CD4-positive, alpha-beta T cell (primary cell): ENCODE measurements at regions of chr14 and their contacts with region 1.

Region 1: DNA sequence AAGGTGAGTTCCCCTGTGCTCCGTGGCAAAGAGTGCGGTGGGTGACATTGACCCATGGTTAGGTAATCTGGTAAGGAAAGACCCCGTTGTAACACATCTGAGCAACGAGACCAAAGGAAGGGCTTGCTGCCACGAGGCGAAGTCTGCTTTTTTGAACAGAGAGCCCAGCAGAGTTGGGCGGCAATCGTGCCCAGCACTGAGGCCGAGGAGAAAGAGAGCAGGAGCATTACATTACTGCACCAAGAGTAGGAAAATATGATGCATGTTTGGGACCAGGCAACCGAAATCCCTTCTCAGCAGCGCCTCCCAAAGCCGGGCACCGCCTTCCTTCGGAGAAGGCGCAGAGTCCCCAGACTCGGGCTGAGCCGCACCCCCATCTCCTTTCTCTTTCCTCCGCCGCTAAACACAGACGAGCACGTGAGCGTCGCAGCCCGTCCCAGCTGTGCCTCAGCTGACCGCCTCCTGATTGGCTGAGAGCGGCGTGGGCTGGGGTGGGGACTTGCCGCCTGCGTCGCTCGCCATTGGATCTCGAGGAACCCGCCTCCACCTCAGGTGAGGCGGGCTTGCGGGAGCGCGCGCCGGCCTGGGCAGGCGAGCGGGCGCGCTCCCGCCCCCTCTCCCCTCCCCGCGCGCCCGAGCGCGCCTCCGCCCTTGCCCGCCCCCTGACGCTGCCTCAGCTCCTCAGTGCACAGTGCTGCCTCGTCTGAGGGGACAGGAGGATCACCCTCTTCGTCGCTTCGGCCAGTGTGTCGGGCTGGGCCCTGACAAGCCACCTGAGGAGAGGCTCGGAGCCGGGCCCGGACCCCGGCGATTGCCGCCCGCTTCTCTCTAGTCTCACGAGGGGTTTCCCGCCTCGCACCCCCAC is at the start of gene HIF1A:
- DNase-seq: peak; percentile 87 to 100 (median 95)
- ATAC-seq: peak; percentile 95
- H3K4me3 ChIP-seq: peak within 1 kb of the TSS; percentile 90
- H3K4me3 Mint-ChIP-seq: peak within 1 kb of the TSS; percentile 98
- H3K27ac ChIP-seq: peak within 1 kb of the TSS; percentile 89 to 91
- H3K27ac Mint-ChIP-seq: peak within 1 kb of the TSS; percentile 97
- H3K4me1 ChIP-seq: peaks cover 17% of the 10 kb centered on the region
- H3K4me1 Mint-ChIP-seq: peaks cover 72% of the 10 kb centered on the region
- H3K27me3 ChIP-seq: no peaks in the 10 kb centered on the region
- H3K27me3 Mint-ChIP-seq: no peaks in the 10 kb centered on the region
- CTCF ChIP-seq: no peak
- total RNA-seq, gene HIF1A: 350 to 369 TPM

Region 2: GRCh38 chr14:61003571-61003970 is 691.5 kb before region 1 on chr14:
- CTCF ChIA-PET with region 1: no interaction called
- POLR2A ChIA-PET with region 1: no interaction called
- intact Hi-C with region 1: no loop called
- DNase-seq: no peak
- ATAC-seq: no peak
- H3K4me3 ChIP-seq: no peak overlapping the region
- H3K4me3 Mint-ChIP-seq: no peak overlapping the region
- H3K27ac ChIP-seq: no peak overlapping the region
- H3K27ac Mint-ChIP-seq: no peak overlapping the region
- H3K4me1 ChIP-seq: no peaks in the 10 kb centered on the region
- H3K4me1 Mint-ChIP-seq: no peaks in the 10 kb centered on the region
- H3K27me3 ChIP-seq: no peaks in the 10 kb centered on the region
- H3K27me3 Mint-ChIP-seq: no peaks in the 10 kb centered on the region
- CTCF ChIP-seq: no peak

Region 3: GRCh38 chr14:61461808-61462275 is 233.2 kb before region 1 on chr14:
- CTCF ChIA-PET with region 1: no interaction called
- POLR2A ChIA-PET with region 1: no interaction called
- intact Hi-C with region 1: no loop called
- DNase-seq: peak in 5 of 14 experiments; percentile 31 to 82 (median 76)
- ATAC-seq: peak; percentile 67
- H3K4me3 ChIP-seq: no peak overlapping the region
- H3K4me3 Mint-ChIP-seq: peak overlapping the region; percentile 2
- H3K27ac ChIP-seq: peak overlapping the region in 1 of 2 donors; percentile 10
- H3K27ac Mint-ChIP-seq: peak overlapping the region; percentile 73
- H3K4me1 ChIP-seq: peaks cover 40% of the 10 kb centered on the region
- H3K4me1 Mint-ChIP-seq: peaks cover 75% of the 10 kb centered on the region
- H3K27me3 ChIP-seq: no peaks in the 10 kb centered on the region
- H3K27me3 Mint-ChIP-seq: no peaks in the 10 kb centered on the region
- CTCF ChIP-seq: peak; percentile 80

Region 4: DNA sequence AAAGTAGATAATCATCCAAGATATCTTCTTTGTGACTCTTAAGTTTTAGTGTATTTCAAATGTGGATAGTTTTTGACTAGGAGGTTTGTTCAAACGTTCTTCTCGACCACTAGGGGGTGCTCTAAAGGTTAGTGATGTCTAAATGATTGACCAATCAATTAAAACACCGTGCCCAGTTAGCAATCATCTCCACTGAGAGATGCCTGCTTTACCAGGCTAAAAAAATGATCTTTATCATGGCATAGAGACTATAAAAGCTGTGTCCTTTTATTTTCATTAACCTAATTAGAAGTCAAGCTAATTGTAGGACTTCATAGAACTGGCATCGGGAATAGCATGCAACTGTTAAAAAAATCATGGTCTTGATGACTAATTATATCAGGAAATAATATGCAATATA is 219.7 kb before region 1 on chr14:
- CTCF ChIA-PET with region 1: no interaction called
- POLR2A ChIA-PET with region 1: interaction called, 27 read pairs
- intact Hi-C with region 1: loop called in 1 of 2 experiments (anchors 1 kb)
- DNase-seq: peak in 3 of 14 experiments; percentile 71 to 80 (median 76)
- ATAC-seq: no peak
- H3K4me3 ChIP-seq: no peak overlapping the region
- H3K4me3 Mint-ChIP-seq: peak overlapping the region; percentile 5
- H3K27ac ChIP-seq: peak overlapping the region; percentile 95 to 97
- H3K27ac Mint-ChIP-seq: peak overlapping the region; percentile 84
- H3K4me1 ChIP-seq: peaks cover 86% of the 10 kb centered on the region
- H3K4me1 Mint-ChIP-seq: peaks cover 96% of the 10 kb centered on the region
- H3K27me3 ChIP-seq: no peaks in the 10 kb centered on the region
- H3K27me3 Mint-ChIP-seq: no peaks in the 10 kb centered on the region
- CTCF ChIP-seq: peak; percentile 71

Region 5: GRCh38 chr14:61568572-61569131 is 126.4 kb before region 1 on chr14:
- CTCF ChIA-PET with region 1: no interaction called
- POLR2A ChIA-PET with region 1: interaction called, 3 read pairs
- intact Hi-C with region 1: loop called (anchors 2 to 5 kb)
- DNase-seq: peak; percentile 24 to 79 (median 54)
- ATAC-seq: peak; percentile 83
- H3K4me3 ChIP-seq: peak overlapping the region; percentile 45
- H3K4me3 Mint-ChIP-seq: peak overlapping the region; percentile 76
- H3K27ac ChIP-seq: no peak overlapping the region
- H3K27ac Mint-ChIP-seq: peak overlapping the region; percentile 83
- H3K4me1 ChIP-seq: peaks cover 39% of the 10 kb centered on the region
- H3K4me1 Mint-ChIP-seq: peaks cover 59% of the 10 kb centered on the region
- H3K27me3 ChIP-seq: no peaks in the 10 kb centered on the region
- H3K27me3 Mint-ChIP-seq: no peaks in the 10 kb centered on the region
- CTCF ChIP-seq: no peak

Region 6: DNA sequence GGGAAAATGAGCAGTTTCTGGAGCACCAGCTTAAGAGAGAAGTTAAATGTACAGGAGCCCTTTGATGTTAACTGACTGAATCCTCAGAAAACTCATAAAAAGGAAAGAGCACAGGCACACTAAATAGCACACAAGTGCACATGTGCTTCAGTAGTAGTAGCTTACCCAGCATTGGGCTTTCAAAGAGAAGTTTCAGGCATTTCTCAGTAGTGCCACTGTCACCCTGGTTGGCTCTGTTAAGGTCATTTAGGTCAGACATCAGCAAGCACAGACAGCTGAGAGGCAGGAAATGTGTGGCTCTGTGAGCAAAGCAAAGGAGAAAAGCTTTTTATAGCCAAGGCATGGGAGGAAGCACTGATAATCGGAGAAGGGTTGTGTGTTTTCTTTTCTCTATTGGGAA is 96.1 kb before region 1 on chr14:
- CTCF ChIA-PET with region 1: no interaction called
- POLR2A ChIA-PET with region 1: no interaction called
- intact Hi-C with region 1: no loop called
- DNase-seq: peak in 1 of 14 experiments; percentile 26
- ATAC-seq: peak; percentile 29
- H3K4me3 ChIP-seq: no peak overlapping the region
- H3K4me3 Mint-ChIP-seq: no peak overlapping the region
- H3K27ac ChIP-seq: no peak overlapping the region
- H3K27ac Mint-ChIP-seq: no peak overlapping the region
- H3K4me1 ChIP-seq: peaks cover 11% of the 10 kb centered on the region
- H3K4me1 Mint-ChIP-seq: peaks cover 34% of the 10 kb centered on the region
- H3K27me3 ChIP-seq: no peaks in the 10 kb centered on the region
- H3K27me3 Mint-ChIP-seq: no peaks in the 10 kb centered on the region
- CTCF ChIP-seq: no peak

Region 7: GRCh38 chr14:61671082-61671481 is 24.0 kb before region 1 on chr14:
- CTCF ChIA-PET with region 1: no interaction called
- POLR2A ChIA-PET with region 1: interaction called, 6 read pairs
- intact Hi-C with region 1: loop called (anchors 2 kb)
- DNase-seq: peak in 9 of 14 experiments; percentile 5 to 87 (median 27)
- ATAC-seq: peak; percentile 93
- H3K4me3 ChIP-seq: peak overlapping the region; percentile 22
- H3K4me3 Mint-ChIP-seq: no peak overlapping the region
- H3K27ac ChIP-seq: peak overlapping the region; percentile 81 to 96
- H3K27ac Mint-ChIP-seq: no peak overlapping the region
- H3K4me1 ChIP-seq: peaks cover 63% of the 10 kb centered on the region
- H3K4me1 Mint-ChIP-seq: peaks cover 24% of the 10 kb centered on the region
- H3K27me3 ChIP-seq: no peaks in the 10 kb centered on the region
- H3K27me3 Mint-ChIP-seq: no peaks in the 10 kb centered on the region
- CTCF ChIP-seq: no peak

Region 8: GRCh38 chr14:61719344-61720293 is 24.6 kb after region 1 on chr14:
- CTCF ChIA-PET with region 1: no interaction called
- POLR2A ChIA-PET with region 1: interaction called, 24 read pairs
- intact Hi-C with region 1: no loop called
- DNase-seq: peak in 3 of 14 experiments; percentile 49 to 57 (median 52)
- ATAC-seq: peak; percentile 77
- H3K4me3 ChIP-seq: no peak overlapping the region
- H3K4me3 Mint-ChIP-seq: peak overlapping the region; percentile 49
- H3K27ac ChIP-seq: peak overlapping the region; percentile 18 to 46
- H3K27ac Mint-ChIP-seq: peak overlapping the region; percentile 73
- H3K4me1 ChIP-seq: peaks cover 26% of the 10 kb centered on the region
- H3K4me1 Mint-ChIP-seq: peaks cover 80% of the 10 kb centered on the region
- H3K27me3 ChIP-seq: no peaks in the 10 kb centered on the region
- H3K27me3 Mint-ChIP-seq: no peaks in the 10 kb centered on the region
- CTCF ChIP-seq: no peak

Region 9: DNA sequence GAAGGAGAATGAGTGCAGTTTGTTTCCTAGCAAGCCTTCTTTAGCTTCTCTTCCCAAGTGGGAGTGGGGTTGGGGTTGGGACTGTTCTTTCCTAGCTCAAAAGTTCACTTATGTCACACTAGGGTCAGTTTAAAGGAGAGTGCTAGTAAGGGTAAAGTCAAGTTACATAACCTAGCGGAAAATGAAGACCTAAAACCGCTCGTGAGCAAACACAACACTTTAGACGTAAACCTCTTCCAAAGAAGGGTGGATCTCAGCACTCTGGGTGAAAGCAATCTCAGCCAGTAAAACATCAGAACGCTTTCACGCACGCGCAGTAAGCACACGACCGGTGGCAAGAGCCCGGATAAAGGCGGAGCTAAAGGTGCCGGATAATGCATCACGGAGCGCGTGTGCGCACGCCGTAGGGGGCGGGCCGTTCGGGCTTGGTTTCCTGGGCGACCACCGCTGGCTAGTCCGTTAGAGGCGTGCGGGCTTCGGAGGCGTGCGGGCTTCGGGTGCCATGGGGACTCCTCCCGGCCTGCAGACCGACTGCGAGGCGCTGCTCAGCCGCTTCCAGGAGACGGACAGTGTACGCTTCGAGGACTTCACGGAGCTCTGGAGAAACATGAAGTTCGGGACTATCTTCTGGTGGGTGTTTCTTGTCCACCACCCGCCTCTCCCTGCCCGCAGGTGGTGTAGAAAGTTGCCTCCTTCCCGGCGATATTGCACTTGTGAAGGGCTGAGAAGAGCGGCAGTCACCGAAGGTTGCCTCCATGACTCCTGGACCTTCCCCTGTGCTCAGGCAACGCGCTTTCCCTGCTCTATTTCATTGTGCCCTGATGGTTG is 67.1 kb after region 1 on chr14 and contains the start of gene SNAPC1:
- CTCF ChIA-PET with region 1: interaction called, 4 read pairs
- POLR2A ChIA-PET with region 1: interaction called, 13 read pairs
- intact Hi-C with region 1: no loop called
- DNase-seq: peak; percentile 95 to 100 (median 97)
- ATAC-seq: peak; percentile 90
- H3K4me3 ChIP-seq: peak within 1 kb of the TSS; percentile 68
- H3K4me3 Mint-ChIP-seq: peak within 1 kb of the TSS; percentile 93
- H3K27ac ChIP-seq: peak within 1 kb of the TSS; percentile 96 to 99
- H3K27ac Mint-ChIP-seq: peak within 1 kb of the TSS; percentile 99
- H3K4me1 ChIP-seq: peaks cover 23% of the 10 kb centered on the region
- H3K4me1 Mint-ChIP-seq: peaks cover 54% of the 10 kb centered on the region
- H3K27me3 ChIP-seq: no peaks in the 10 kb centered on the region
- H3K27me3 Mint-ChIP-seq: no peaks in the 10 kb centered on the region
- CTCF ChIP-seq: no peak
- total RNA-seq, gene SNAPC1: 4.8 to 5.0 TPM